B cell (primary cell): ENCODE measurements at regions of chr7 and their contacts with region 1.

Region 1: GRCh38 chr7:92731335-92732063 is 104.9 kb downstream of the CDK6 start:
- DNase-seq: peak; percentile 72
- ATAC-seq: peak; percentile 66
- H3K4me3 ChIP-seq: no peak overlapping the region
- H3K4me3 Mint-ChIP-seq: peak overlapping the region; percentile 68
- H3K27ac ChIP-seq: peak overlapping the region; percentile 75 to 81
- H3K27ac Mint-ChIP-seq: peak overlapping the region; percentile 88
- H3K4me1 ChIP-seq: peaks cover 27 to 29% of the 10 kb centered on the region in 2 donors
- H3K4me1 Mint-ChIP-seq: peaks cover 30% of the 10 kb centered on the region
- H3K27me3 ChIP-seq: no peaks in the 10 kb centered on the region
- H3K27me3 Mint-ChIP-seq: no peaks in the 10 kb centered on the region
- CTCF ChIP-seq: no peak

Region 2: GRCh38 chr7:92680442-92680841 is 51.1 kb before region 1 on chr7:
- CTCF ChIA-PET with region 1: no interaction called
- POLR2A ChIA-PET with region 1: no interaction called
- intact Hi-C with region 1: loop called (anchors 1 kb)
- DNase-seq: no peak
- ATAC-seq: no peak
- H3K4me3 ChIP-seq: no peak overlapping the region
- H3K4me3 Mint-ChIP-seq: no peak overlapping the region
- H3K27ac ChIP-seq: no peak overlapping the region
- H3K27ac Mint-ChIP-seq: no peak overlapping the region
- H3K4me1 ChIP-seq: no peaks in the 10 kb centered on the region
- H3K4me1 Mint-ChIP-seq: peaks cover 2% of the 10 kb centered on the region
- H3K27me3 ChIP-seq: no peaks in the 10 kb centered on the region
- H3K27me3 Mint-ChIP-seq: no peaks in the 10 kb centered on the region
- CTCF ChIP-seq: no peak

Region 3: GRCh38 chr7:92717993-92718716 is 13.3 kb before region 1 on chr7:
- CTCF ChIA-PET with region 1: no interaction called
- POLR2A ChIA-PET with region 1: no interaction called
- intact Hi-C with region 1: loop called (anchors 1 kb)
- DNase-seq: peak; percentile 66
- ATAC-seq: peak; percentile 93
- H3K4me3 ChIP-seq: peak overlapping the region; percentile 36 to 67 (median 54)
- H3K4me3 Mint-ChIP-seq: peak overlapping the region; percentile 94
- H3K27ac ChIP-seq: peak overlapping the region; percentile 36 to 66
- H3K27ac Mint-ChIP-seq: peak overlapping the region; percentile 92
- H3K4me1 ChIP-seq: peaks cover 13 to 16% of the 10 kb centered on the region in 2 donors
- H3K4me1 Mint-ChIP-seq: peaks cover 26% of the 10 kb centered on the region
- H3K27me3 ChIP-seq: no peaks in the 10 kb centered on the region
- H3K27me3 Mint-ChIP-seq: no peaks in the 10 kb centered on the region
- CTCF ChIP-seq: no peak

Region 4: GRCh38 chr7:92809397-92810241 is 78.1 kb after region 1 on chr7:
- CTCF ChIA-PET with region 1: no interaction called
- POLR2A ChIA-PET with region 1: no interaction called
- intact Hi-C with region 1: loop called (anchors 5 kb)
- DNase-seq: peak; percentile 66
- ATAC-seq: peak; percentile 78
- H3K4me3 ChIP-seq: no peak overlapping the region
- H3K4me3 Mint-ChIP-seq: peak overlapping the region; percentile 63
- H3K27ac ChIP-seq: no peak overlapping the region
- H3K27ac Mint-ChIP-seq: peak overlapping the region; percentile 28
- H3K4me1 ChIP-seq: peaks cover 16 to 20% of the 10 kb centered on the region in 2 donors
- H3K4me1 Mint-ChIP-seq: peaks cover 27% of the 10 kb centered on the region
- H3K27me3 ChIP-seq: no peaks in the 10 kb centered on the region
- H3K27me3 Mint-ChIP-seq: no peaks in the 10 kb centered on the region
- CTCF ChIP-seq: no peak

Region 5: GRCh38 chr7:92898798-92899197 is 167.3 kb after region 1 on chr7:
- CTCF ChIA-PET with region 1: no interaction called
- POLR2A ChIA-PET with region 1: no interaction called
- intact Hi-C with region 1: no loop called
- DNase-seq: no peak
- ATAC-seq: no peak
- H3K4me3 ChIP-seq: no peak overlapping the region
- H3K4me3 Mint-ChIP-seq: no peak overlapping the region
- H3K27ac ChIP-seq: no peak overlapping the region
- H3K27ac Mint-ChIP-seq: no peak overlapping the region
- H3K4me1 ChIP-seq: no peaks in the 10 kb centered on the region
- H3K4me1 Mint-ChIP-seq: peaks cover 4% of the 10 kb centered on the region
- H3K27me3 ChIP-seq: no peaks in the 10 kb centered on the region
- H3K27me3 Mint-ChIP-seq: no peaks in the 10 kb centered on the region
- CTCF ChIP-seq: no peak